Activated CD4-positive, alpha-beta memory T cell treated with anti-CD3 and anti-CD28 coated beads, Interleukin-2, amount 10 ng/mL, durations not matched to agents 7 days and 5 days (primary cell): ENCODE measurements at regions of chr7 and their contacts with region 1.

Region 1: DNA sequence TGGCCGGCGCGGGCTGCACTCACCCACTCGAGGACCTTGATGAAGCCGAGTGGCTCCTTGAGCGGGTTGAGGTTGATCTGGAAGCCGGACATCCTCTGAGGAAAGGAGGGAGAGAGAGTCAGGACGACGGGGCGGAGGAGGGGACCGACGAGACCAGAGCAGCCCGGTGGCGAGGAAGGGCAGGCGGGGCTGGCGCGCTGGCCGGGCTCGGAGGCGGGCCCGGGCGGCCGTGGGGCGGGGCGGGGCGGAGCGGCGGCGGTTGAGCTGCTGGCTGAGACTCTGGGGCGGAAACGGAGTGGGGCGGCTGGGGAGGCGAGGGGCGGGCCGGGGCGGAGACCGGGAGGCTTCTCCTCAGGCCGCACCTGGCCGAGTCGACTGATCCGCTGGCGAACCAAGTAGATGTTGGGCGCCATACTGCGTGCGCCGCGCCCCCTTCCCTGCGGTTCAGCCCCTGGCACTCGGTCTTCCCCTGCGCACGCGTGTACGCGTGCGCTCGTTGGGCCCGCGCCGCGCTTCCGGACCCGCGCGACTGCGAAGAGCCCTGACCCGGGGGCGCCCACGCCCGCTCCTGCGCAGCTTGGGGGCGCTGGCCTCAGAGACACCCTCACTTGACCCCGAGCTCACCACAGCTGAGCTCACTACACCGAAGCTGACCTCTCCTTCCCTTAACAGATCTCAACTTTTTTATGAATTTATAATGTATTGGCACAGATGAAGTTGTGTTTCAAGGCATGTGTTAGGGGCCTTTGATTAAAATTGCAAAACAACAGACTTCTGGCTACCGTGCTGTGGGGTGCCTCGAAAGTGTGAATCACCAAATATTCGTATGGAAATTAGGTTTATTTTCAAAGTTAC is at the start of gene SYPL1:
- DNase-seq: peak; percentile 91
- H3K4me3 Mint-ChIP-seq: peak within 1 kb of the TSS; percentile 82
- H3K27ac Mint-ChIP-seq: peak within 1 kb of the TSS; percentile 85
- H3K4me1 Mint-ChIP-seq: peaks cover 45% of the 10 kb centered on the region
- H3K27me3 Mint-ChIP-seq: peaks cover 14% of the 10 kb centered on the region
- total RNA-seq, gene SYPL1: 37.5 to 38.8 TPM

Region 2: GRCh38 chr7:106101726-106102125 is 10.6 kb before region 1 on chr7:
- CTCF ChIA-PET with region 1: interaction called, 4 read pairs
- POLR2A ChIA-PET with region 1: interaction called, 12 read pairs
- DNase-seq: no peak
- H3K4me3 Mint-ChIP-seq: no peak overlapping the region
- H3K27ac Mint-ChIP-seq: no peak overlapping the region
- H3K4me1 Mint-ChIP-seq: peaks cover 27% of the 10 kb centered on the region
- H3K27me3 Mint-ChIP-seq: no peaks in the 10 kb centered on the region

Region 3: GRCh38 chr7:106126170-106126938 is 14.0 kb after region 1 on chr7:
- CTCF ChIA-PET with region 1: no interaction called
- POLR2A ChIA-PET with region 1: interaction called, 14 read pairs
- DNase-seq: peak; percentile 29
- H3K4me3 Mint-ChIP-seq: peak overlapping the region; percentile 42
- H3K27ac Mint-ChIP-seq: peak overlapping the region; percentile 1
- H3K4me1 Mint-ChIP-seq: peaks cover 11% of the 10 kb centered on the region
- H3K27me3 Mint-ChIP-seq: peaks cover 30% of the 10 kb centered on the region

Region 4: GRCh38 chr7:106618480-106618879 is 506.1 kb after region 1 on chr7:
- CTCF ChIA-PET with region 1: no interaction called
- POLR2A ChIA-PET with region 1: no interaction called
- DNase-seq: no peak
- H3K4me3 Mint-ChIP-seq: no peak overlapping the region
- H3K27ac Mint-ChIP-seq: no peak overlapping the region
- H3K4me1 Mint-ChIP-seq: peaks cover 2% of the 10 kb centered on the region
- H3K27me3 Mint-ChIP-seq: peaks cover 9% of the 10 kb centered on the region